Posterior vena cava (tissue), 2 donors: ENCODE measurements at regions of chr10 and their contacts with region 1.

Region 1: DNA sequence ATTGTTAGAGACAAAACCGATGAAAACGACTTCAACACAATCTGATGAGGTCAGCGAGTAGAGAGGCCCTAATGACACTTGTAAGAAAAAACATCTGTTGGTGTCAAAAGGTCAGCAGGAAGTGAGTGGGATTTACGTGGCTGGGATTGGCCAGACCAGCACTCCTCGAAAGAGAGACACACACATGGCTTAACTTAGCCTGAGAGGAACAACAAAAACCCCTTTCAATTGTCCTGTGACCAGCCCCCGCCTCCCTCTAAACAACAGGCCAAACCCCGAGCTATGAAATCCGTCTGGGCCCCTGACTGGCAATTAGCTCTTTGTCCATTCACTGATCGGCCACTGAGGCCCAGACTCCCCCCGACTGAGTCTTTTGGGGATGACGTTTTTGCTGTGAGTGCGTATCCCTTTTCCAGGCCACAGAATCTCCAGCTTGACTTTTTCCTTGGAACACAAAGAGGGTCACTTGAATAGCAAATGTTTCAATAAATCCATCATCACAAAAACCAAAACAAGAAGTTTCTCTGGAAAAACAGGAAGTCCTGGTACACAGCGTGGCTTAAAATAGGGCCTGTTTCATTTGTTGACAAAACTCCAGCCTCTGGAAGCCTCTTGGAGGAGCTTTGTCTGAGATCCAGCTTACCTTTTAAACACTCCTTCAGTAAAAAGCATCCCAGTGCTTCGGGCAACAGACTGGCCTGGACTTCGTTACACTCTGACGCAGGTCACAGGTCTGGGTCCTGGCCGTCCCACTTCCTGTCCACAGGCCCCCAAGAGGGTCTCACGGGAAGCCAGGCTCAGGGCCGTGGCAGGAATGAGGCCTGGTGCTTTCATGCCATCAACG is 103.0 kb downstream of the CTBP2 start:
- DNase-seq: peak; percentile 88

Region 2: DNA sequence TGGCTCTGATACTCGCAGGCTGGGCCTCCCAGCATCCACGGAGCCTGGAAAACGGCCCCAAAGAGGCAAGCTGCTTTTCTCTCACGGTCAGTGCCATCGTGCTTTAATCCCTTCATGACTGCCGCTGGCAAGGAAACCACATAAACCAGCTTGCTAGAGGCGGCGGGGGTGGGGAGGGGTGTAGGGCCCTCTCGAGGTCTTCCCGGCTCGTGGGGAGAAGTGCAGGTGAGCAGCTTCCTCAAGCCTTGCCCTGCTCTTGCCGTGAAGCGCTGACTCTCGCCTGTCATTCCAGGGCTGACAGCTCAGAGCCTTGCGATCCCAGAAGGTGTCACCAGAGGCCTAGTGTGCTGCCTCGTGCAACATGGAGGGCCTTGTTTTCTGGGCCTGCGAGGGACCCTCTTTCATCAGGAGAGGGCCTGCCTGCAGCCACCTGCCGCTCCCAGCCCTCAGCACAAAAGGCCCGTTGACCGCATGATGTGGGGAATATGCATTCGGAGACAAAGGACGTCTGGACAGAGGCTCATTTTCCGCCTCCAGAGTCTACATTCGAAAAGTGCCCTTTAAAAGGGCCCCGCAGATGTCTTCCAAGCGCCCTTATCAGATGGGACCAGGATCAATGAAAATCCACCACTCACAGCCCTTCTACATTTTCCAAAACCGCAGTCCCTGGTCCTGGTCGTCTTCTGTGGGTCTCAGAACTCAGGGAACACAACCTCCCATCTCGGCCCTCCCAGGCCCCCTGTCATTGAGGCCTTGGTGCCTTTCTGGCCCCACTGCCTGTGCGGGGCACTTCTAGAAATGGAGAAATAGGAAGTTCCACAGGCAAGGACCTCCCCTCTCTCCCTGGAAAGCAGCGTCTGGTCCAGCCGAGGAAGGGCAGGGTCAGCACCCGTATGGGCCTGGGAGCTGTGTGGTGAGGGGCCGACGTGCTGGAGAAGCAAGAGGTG is 56.7 kb before region 1 on chr10:
- intact Hi-C with region 1: loop called in 1 of 2 experiments (anchors 10 kb)
- DNase-seq: peak; percentile 73

Region 3: GRCh38 chr10:125158601-125159485 is 101.5 kb after region 1 on chr10:
- intact Hi-C with region 1: loop called in 1 of 2 experiments (anchors 10 kb)
- DNase-seq: peak; percentile 86

Region 4: GRCh38 chr10:125462845-125463244 is 405.5 kb after region 1 on chr10:
- intact Hi-C with region 1: no loop called
- DNase-seq: no peak